Gastrocnemius medialis (tissue), 4 donors: ENCODE measurements at regions of chr7 and their contacts with region 1.

Region 1: GRCh38 chr7:134316539-134317344 is at the start of gene SLC35B4:
- DNase-seq: peak; percentile 97 to 98
- ATAC-seq: peak; percentile 96 to 97
- H3K4me3 ChIP-seq: peak within 1 kb of the TSS; percentile 76 to 99 (median 84)
- H3K27ac ChIP-seq: peak within 1 kb of the TSS; percentile 88 to 97 (median 94)
- H3K4me1 ChIP-seq: peaks cover 0 to 9% of the 10 kb centered on the region in 2 donors
- H3K27me3 ChIP-seq: no peaks in the 10 kb centered on the region
- CTCF ChIP-seq: peak in 4 of 5 experiments; percentile 27 to 46 (median 34)
- POLR2A ChIP-seq: peak; percentile 14 to 15
- total RNA-seq, gene SLC35B4: 1.7 to 5.0 (median 2.3) TPM

Region 2: GRCh38 chr7:133252858-133253518 is 1063.8 kb before region 1 on chr7 and contains the start of gene EXOC4:
- in situ Hi-C with region 1: loop called in 3 of 4 experiments (anchors 25 kb)
- intact Hi-C with region 1: loop called (anchors 2 kb)
- DNase-seq: peak; percentile 93 to 95
- ATAC-seq: peak; percentile 100
- H3K4me3 ChIP-seq: peak within 1 kb of the TSS; percentile 84 to 99 (median 90)
- H3K27ac ChIP-seq: peak within 1 kb of the TSS; percentile 92 to 98 (median 93)
- H3K4me1 ChIP-seq: peaks cover 18 to 28% of the 10 kb centered on the region in 2 donors
- H3K27me3 ChIP-seq: no peaks in the 10 kb centered on the region
- CTCF ChIP-seq: no peak
- POLR2A ChIP-seq: peak; percentile 65
- total RNA-seq, gene EXOC4: 36.9 to 78.0 (median 52.2) TPM

Region 3: GRCh38 chr7:134126966-134127848 is 189.5 kb before region 1 on chr7 and contains the start of gene LRGUK:
- in situ Hi-C with region 1: loop called in 1 of 4 experiments (anchors 10 kb)
- intact Hi-C with region 1: loop called (anchors 1 kb)
- DNase-seq: peak; percentile 68 to 74
- ATAC-seq: peak; percentile 99
- H3K4me3 ChIP-seq: peak within 1 kb of the TSS; percentile 70 to 84 (median 74)
- H3K27ac ChIP-seq: no peak within 1 kb of the TSS
- H3K4me1 ChIP-seq: peaks cover 4 to 5% of the 10 kb centered on the region in 2 donors
- H3K27me3 ChIP-seq: no peaks in the 10 kb centered on the region
- CTCF ChIP-seq: no peak
- POLR2A ChIP-seq: no peak
- total RNA-seq, gene LRGUK: 0.10 TPM in 1 of 4 donors, not detected in the others

Region 4: DNA sequence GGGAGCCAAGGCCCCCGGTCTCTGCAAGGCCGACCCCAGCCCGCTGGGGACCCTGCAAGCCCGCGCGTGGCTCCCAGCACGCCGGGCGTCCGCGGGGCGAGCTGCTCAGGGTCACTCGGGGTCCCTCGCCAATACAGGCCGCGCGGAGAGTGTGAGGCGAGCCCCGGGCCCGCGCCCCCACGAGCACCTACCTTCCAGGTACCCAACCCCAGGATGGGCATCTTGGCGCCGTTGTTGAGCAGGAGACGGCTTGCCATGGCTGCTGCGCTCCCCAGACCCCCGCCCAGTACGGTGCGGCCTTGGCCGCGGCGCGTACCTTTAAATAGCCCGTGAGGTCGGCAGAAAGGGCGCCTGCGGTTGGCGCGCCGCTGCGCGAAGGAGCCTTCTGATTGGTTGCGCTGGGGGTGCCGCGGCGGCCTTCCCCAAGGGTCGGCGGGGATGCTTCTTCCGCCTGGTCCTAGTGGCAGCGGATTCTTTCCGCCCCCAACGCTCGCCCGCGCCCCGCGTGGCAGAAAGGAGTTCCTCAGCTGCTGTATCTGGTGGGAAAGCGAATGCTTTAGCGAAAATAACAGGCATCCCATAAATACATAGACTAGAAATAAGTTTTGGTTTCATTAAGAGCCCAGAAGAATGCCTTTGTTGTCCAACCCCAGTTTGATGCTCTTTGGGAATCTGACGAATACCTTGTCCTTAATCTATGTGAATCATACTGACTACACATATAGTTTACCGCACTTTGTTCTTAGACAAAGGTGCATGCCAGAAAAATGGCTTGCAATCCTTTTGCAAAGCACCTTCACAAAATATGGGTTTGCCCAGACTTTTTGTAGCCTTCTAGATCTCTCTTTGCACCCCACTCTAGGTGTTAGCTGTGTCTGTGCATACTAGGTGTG is 142.3 kb after region 1 on chr7 and contains the start of gene AKR1B1:
- in situ Hi-C with region 1: no loop called
- intact Hi-C with region 1: loop called (anchors 5 kb)
- DNase-seq: peak; percentile 81 to 92
- ATAC-seq: peak; percentile 93 to 95
- H3K4me3 ChIP-seq: peak within 1 kb of the TSS; percentile 82 to 97 (median 88)
- H3K27ac ChIP-seq: peak within 1 kb of the TSS; percentile 87 to 95 (median 90)
- H3K4me1 ChIP-seq: peaks cover 13 to 26% of the 10 kb centered on the region in 2 donors
- H3K27me3 ChIP-seq: no peaks in the 10 kb centered on the region
- CTCF ChIP-seq: peak; percentile 32 to 57 (median 43)
- POLR2A ChIP-seq: peak; percentile 84
- total RNA-seq, gene AKR1B1: 87.3 to 119 (median 95.6) TPM

Region 5: GRCh38 chr7:135662373-135663114 is 1345.8 kb after region 1 on chr7 and contains the start of gene STMP1:
- in situ Hi-C with region 1: no loop called
- intact Hi-C with region 1: loop called (anchors 5 kb)
- DNase-seq: peak; percentile 93 to 95
- ATAC-seq: peak; percentile 93 to 94
- H3K4me3 ChIP-seq: peak within 1 kb of the TSS; percentile 81 to 100 (median 90)
- H3K27ac ChIP-seq: peak within 1 kb of the TSS; percentile 91 to 99 (median 94)
- H3K4me1 ChIP-seq: peaks cover 35 to 47% of the 10 kb centered on the region in 2 donors
- H3K27me3 ChIP-seq: no peaks in the 10 kb centered on the region
- CTCF ChIP-seq: peak in 2 of 5 experiments; percentile 87 to 91
- POLR2A ChIP-seq: peak; percentile 90 to 93
- total RNA-seq, gene STMP1: 7.7 to 19.9 (median 11.8) TPM